Heart left ventricle (tissue), 16 donors: ENCODE measurements at regions of chr7 and their contacts with region 1.

Region 1: DNA sequence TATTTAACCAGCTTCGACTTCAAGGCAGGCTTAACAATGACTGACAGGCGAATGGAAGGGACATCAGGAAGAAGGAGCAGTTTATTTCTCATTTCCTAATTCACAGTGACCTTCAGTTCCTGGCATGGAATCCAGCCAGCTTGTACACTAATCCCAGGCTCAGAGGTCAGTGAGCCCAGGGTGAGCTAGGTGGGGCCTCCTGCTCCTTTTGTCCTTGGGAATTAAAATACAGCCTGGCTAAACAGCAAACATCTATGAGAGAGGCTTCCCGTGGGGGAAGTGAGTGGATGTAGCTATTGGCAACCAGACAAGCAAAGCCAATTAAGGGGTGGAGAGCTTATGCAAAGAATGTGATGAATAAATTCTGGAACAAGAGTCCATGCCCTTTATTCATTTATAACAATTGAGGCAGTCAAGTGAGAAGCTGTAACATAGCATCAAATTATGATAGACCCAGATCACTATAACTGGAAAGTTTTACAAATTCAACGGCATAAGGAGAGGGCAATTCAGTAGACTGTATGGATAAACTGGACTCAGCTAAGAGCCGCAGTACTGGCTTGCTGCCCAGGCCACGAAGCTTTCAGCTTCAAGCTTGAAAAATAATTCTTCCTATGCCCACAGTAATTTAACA is 57.1 kb downstream of the STK17A start:
- DNase-seq: peak in 4 of 5 donors; percentile 47 to 73 (median 56)
- ATAC-seq: peak; percentile 61 to 93 (median 87)
- H3K4me3 ChIP-seq: no peak overlapping the region
- H3K27ac ChIP-seq: peak overlapping the region; percentile 30 to 72 (median 57)
- H3K4me1 ChIP-seq: peaks cover 0 to 59% (median 18%) of the 10 kb centered on the region in 12 donors
- H3K27me3 ChIP-seq: no peaks in the 10 kb centered on the region
- CTCF ChIP-seq: no peak
- POLR2A ChIP-seq: no peak

Region 2: DNA sequence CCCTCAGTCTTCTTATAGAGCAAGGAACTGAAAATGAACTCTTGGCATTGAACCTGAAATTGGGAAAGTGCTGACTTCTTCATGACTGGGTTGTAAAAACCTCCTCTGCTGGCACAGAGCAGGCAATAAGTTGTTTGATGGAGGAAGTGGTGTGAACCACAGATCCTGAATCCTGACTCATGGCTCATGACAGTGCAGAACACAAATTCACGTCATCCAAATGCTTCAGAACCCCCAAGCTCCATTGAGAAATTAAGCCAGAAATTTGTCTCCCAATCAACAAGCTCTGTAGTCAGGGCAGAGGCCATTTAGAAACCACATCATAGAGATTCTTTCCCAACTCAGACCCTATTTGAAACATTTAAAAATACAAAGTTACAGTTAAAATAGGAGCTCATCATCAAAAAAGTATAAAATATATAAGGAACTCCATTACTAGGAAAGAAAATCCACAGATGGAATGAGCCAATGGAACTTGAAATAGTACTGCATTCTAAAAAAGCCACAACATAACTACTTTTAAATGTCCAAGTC is 67.4 kb before region 1 on chr7:
- intact Hi-C with region 1: no loop called
- DNase-seq: peak in 2 of 5 donors; percentile 23 to 29
- ATAC-seq: peak; percentile 42 to 87 (median 78)
- H3K4me3 ChIP-seq: no peak overlapping the region
- H3K27ac ChIP-seq: peak overlapping the region in 1 of 12 donors; percentile 49
- H3K4me1 ChIP-seq: peaks cover 0 to 12% (median 0%) of the 10 kb centered on the region in 12 donors
- H3K27me3 ChIP-seq: no peaks in the 10 kb centered on the region
- CTCF ChIP-seq: no peak
- POLR2A ChIP-seq: no peak

Region 3: GRCh38 chr7:43602271-43602670 is 37.7 kb before region 1 on chr7:
- intact Hi-C with region 1: loop called in 1 of 10 experiments (anchors 5 kb)
- DNase-seq: no peak
- ATAC-seq: no peak
- H3K4me3 ChIP-seq: no peak overlapping the region
- H3K27ac ChIP-seq: no peak overlapping the region
- H3K4me1 ChIP-seq: peaks cover 0 to 20% (median 0%) of the 10 kb centered on the region in 12 donors
- H3K27me3 ChIP-seq: no peaks in the 10 kb centered on the region
- CTCF ChIP-seq: no peak
- POLR2A ChIP-seq: no peak